MCF 10A (cell line): ENCODE measurements at regions of chr1 and their contacts with region 1.

Region 1: DNA sequence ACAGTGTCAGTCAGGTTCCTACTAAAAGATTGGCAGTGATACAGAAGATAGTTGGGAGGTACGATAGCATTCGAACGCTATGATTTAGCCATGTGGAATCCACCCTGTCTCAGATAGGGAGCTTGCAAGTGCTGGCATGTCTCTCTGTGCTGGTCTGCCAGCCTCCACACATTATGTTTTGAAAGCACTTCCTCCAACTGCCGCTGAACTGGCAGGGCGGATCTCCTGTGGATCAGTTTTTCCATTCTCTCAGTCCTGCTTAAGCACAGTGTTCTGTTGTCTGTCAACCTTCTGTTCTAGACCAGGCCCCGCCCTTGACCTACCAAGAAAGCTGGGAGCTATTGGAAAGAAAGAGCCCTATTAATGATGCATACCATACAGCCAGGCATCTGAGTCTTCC is 65.5 kb upstream of the PALMD start:
- DNase-seq: peak; percentile 90
- H3K4me3 Mint-ChIP-seq: peak overlapping the region; percentile 33
- H3K27ac Mint-ChIP-seq: peak overlapping the region; percentile 96
- H3K4me1 Mint-ChIP-seq: peaks cover 20% of the 10 kb centered on the region
- H3K27me3 Mint-ChIP-seq: no peaks in the 10 kb centered on the region
- CTCF ChIP-seq: no peak

Region 2: DNA sequence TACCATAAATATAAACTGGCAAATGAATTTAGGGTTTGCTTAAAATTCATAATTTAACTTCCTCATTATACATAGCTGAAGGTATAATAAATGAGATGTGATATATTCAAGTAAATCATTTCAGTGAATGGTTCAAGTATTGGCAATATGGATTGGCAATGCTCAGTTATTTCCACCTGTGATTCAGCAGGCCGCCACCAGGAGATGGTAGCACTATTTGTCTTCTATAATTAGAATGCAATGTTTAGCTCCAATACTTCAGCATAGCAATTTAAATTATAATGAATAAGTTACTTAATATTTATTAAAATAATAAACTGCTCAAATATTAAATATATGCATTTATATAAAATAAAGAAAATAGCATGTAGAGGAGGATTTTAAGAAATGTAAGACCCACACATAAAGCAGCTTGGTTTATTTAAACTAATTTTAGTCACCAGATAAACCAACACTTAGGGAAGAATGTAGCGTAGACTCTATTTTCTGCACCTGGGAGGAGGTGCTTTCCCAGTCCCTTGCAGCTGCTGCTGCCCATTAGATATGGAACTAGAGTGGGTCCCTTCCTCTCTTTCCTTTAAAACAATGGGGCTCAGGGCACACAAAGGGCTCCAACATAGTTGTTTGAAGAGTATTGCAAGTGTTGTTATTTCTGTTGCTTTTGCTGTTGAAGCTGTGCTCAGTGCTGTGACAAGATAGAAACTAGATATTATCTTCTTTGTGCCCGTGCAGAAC is 254.1 kb before region 1 on chr1:
- CTCF ChIA-PET with region 1: no interaction called
- POLR2A ChIA-PET with region 1: no interaction called
- intact Hi-C with region 1: no loop called
- DNase-seq: peak; percentile 18
- H3K4me3 Mint-ChIP-seq: no peak overlapping the region
- H3K27ac Mint-ChIP-seq: no peak overlapping the region
- H3K4me1 Mint-ChIP-seq: no peaks in the 10 kb centered on the region
- H3K27me3 Mint-ChIP-seq: no peaks in the 10 kb centered on the region
- CTCF ChIP-seq: peak; percentile 23

Region 3: DNA sequence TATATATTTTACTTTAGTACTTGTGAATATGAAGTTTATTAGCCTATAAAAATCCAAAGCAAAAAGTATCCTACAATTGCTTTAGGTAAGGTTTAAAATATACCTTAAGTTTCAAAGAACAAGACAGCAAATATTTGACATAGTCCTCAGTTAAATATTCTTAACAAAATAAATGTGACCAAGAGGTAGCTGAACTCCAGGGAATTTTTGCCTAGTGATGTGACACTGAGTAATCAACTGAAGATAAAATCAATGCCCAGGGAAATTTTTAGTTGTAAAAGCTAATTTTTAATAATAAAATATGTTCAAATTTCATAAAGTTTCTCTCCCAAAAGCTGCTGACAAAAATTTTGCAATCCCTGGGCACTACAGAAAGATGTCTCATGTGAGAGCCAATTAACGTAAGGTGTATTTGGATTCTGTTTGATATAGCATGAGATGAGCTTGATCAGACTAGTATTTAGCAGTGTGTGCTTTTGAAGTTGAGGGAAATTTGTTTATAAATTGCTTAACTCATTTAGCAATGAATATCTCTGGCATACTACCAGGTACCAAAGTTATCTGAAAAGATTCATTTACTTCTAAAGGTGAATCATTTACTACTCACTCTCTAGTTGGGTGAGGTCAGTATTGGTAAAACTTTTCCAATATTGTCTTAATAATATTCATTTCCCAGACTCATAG is 14.7 kb before region 1 on chr1:
- CTCF ChIA-PET with region 1: interaction called, 4 read pairs
- POLR2A ChIA-PET with region 1: interaction called, 14 read pairs
- intact Hi-C with region 1: no loop called
- DNase-seq: peak; percentile 26
- H3K4me3 Mint-ChIP-seq: no peak overlapping the region
- H3K27ac Mint-ChIP-seq: no peak overlapping the region
- H3K4me1 Mint-ChIP-seq: peaks cover 5% of the 10 kb centered on the region
- H3K27me3 Mint-ChIP-seq: no peaks in the 10 kb centered on the region
- CTCF ChIP-seq: no peak

Region 4: GRCh38 chr1:99613716-99614115 is 33.3 kb after region 1 on chr1:
- CTCF ChIA-PET with region 1: interaction called, 4 read pairs
- POLR2A ChIA-PET with region 1: interaction called, 10 read pairs
- intact Hi-C with region 1: no loop called
- DNase-seq: no peak
- H3K4me3 Mint-ChIP-seq: no peak overlapping the region
- H3K27ac Mint-ChIP-seq: no peak overlapping the region
- H3K4me1 Mint-ChIP-seq: no peaks in the 10 kb centered on the region
- H3K27me3 Mint-ChIP-seq: no peaks in the 10 kb centered on the region
- CTCF ChIP-seq: no peak

Region 5: GRCh38 chr1:99621340-99621901 is 41.0 kb after region 1 on chr1:
- CTCF ChIA-PET with region 1: interaction called, 3 read pairs
- POLR2A ChIA-PET with region 1: interaction called, 17 read pairs
- intact Hi-C with region 1: no loop called
- DNase-seq: peak; percentile 89
- H3K4me3 Mint-ChIP-seq: no peak overlapping the region
- H3K27ac Mint-ChIP-seq: peak overlapping the region; percentile 81
- H3K4me1 Mint-ChIP-seq: peaks cover 15% of the 10 kb centered on the region
- H3K27me3 Mint-ChIP-seq: no peaks in the 10 kb centered on the region
- CTCF ChIP-seq: no peak

Region 6: GRCh38 chr1:99645699-99646531 is 65.5 kb after region 1 on chr1 and contains the start of gene PALMD:
- CTCF ChIA-PET with region 1: interaction called, 12 read pairs
- POLR2A ChIA-PET with region 1: interaction called, 73 read pairs
- intact Hi-C with region 1: no loop called
- DNase-seq: peak; percentile 71
- H3K4me3 Mint-ChIP-seq: peak within 1 kb of the TSS; percentile 56
- H3K27ac Mint-ChIP-seq: peak within 1 kb of the TSS; percentile 46
- H3K4me1 Mint-ChIP-seq: peaks cover 34% of the 10 kb centered on the region
- H3K27me3 Mint-ChIP-seq: no peaks in the 10 kb centered on the region
- CTCF ChIP-seq: no peak
- total RNA-seq, gene PALMD: 0.12 and 0.33 TPM in 2 replicates

Region 7: DNA sequence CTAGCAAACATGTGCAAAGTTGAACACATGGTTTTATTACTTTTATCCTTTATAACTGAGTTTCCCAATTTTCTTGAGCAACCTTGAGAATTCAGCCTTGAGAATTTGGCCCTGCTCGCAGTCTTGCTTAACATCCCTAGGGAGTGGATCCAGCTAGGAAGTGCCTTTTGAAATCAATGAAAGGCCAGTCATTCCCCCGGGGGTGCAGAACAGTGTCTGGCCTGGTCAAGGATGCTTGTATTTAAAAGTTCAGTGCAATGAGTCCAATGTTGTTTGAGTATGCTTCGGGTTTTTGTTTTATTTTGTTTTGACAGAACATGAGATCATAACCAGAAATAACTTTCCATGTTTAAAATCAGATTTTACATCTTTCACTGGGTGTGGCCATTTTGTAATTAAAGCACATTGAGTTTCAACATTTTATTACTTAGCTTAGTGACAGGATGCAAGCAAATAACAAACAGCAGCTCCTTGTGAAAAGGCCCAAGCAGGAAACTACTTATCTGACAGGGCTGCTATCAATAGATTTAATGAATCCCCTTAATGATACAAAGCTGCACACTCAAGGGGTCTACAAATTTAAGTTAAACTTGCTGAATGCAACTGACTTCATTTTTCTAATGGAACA is 82.2 kb after region 1 on chr1:
- CTCF ChIA-PET with region 1: interaction called, 3 read pairs
- POLR2A ChIA-PET with region 1: interaction called, 22 read pairs
- intact Hi-C with region 1: no loop called
- DNase-seq: peak; percentile 98
- H3K4me3 Mint-ChIP-seq: no peak overlapping the region
- H3K27ac Mint-ChIP-seq: peak overlapping the region; percentile 95
- H3K4me1 Mint-ChIP-seq: peaks cover 29% of the 10 kb centered on the region
- H3K27me3 Mint-ChIP-seq: no peaks in the 10 kb centered on the region
- CTCF ChIP-seq: no peak

Region 8: DNA sequence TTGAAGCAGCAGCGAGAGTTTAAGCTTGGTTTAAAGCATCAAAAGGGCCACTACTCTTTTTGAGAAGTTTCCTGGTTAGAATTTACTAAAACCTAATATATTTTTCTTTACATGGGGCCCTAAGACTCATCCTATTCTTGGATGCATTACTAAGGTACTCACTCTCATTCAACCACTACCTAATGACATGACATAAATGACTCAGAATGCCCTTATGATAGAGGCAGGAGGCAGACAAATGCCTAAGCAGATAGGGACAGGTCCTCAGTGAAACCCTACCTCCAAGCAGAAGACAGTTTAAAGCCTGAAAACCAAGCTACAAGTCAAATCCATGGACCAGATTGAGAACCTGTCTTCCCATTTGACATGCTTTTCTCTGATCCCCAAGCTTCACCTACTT is 355.1 kb after region 1 on chr1:
- CTCF ChIA-PET with region 1: no interaction called
- POLR2A ChIA-PET with region 1: no interaction called
- intact Hi-C with region 1: no loop called
- DNase-seq: no peak
- H3K4me3 Mint-ChIP-seq: no peak overlapping the region
- H3K27ac Mint-ChIP-seq: no peak overlapping the region
- H3K4me1 Mint-ChIP-seq: no peaks in the 10 kb centered on the region
- H3K27me3 Mint-ChIP-seq: no peaks in the 10 kb centered on the region
- CTCF ChIP-seq: no peak